Panc1 (cell line): ENCODE measurements at regions of chr6 and their contacts with region 1.

Region 1: GRCh38 chr6:166999145-166999883 is at the start of gene CEP43:
- DNase-seq: peak; percentile 78
- ATAC-seq: peak; percentile 97
- H3K4me3 ChIP-seq: peak within 1 kb of the TSS; percentile 88 to 89
- H3K27ac ChIP-seq: peak within 1 kb of the TSS; percentile 94
- H3K4me1 ChIP-seq: peaks cover 18% of the 10 kb centered on the region
- H3K27me3 ChIP-seq: no peaks in the 10 kb centered on the region
- CTCF ChIP-seq: no peak
- total RNA-seq, gene CEP43: 35.4 TPM

Region 2: DNA sequence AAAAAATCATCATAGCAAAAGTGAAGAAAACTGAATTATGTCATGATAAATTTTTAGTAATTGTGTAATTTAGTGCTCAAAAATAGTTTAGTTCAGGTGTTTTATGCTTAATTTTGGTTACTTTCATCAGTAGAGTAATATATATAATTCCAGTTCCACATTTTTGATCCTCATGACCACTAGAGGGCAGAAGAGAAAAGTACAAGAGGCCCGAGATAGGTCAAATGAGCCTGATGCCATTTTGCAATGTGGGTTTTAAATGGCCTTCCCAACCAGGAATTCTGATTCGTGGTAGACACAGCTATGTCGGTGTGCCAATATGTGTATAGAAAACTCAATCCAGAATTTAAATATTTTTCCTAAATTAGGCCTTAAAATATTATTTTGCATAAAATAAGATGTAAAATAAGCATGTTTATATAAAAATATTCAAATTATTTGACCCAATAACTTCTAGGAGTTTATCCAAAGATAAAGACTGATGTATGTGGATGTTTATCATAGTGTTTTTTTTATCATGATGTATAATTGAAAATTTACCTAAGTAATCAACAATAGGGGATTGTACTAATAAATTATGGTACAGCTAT is 212.5 kb before region 1 on chr6:
- CTCF ChIA-PET with region 1: no interaction called
- POLR2A ChIA-PET with region 1: no interaction called
- in situ Hi-C with region 1: no loop called
- intact Hi-C with region 1: loop called (anchors 1 kb)
- DNase-seq: peak; percentile 38
- ATAC-seq: peak; percentile 83
- H3K4me3 ChIP-seq: no peak overlapping the region
- H3K27ac ChIP-seq: no peak overlapping the region
- H3K4me1 ChIP-seq: no peaks in the 10 kb centered on the region
- H3K27me3 ChIP-seq: peaks cover 3% of the 10 kb centered on the region; the same call in 1 of the 2 replicates
- CTCF ChIP-seq: peak; percentile 83; the same call in 1 of the 2 replicates

Region 3: DNA sequence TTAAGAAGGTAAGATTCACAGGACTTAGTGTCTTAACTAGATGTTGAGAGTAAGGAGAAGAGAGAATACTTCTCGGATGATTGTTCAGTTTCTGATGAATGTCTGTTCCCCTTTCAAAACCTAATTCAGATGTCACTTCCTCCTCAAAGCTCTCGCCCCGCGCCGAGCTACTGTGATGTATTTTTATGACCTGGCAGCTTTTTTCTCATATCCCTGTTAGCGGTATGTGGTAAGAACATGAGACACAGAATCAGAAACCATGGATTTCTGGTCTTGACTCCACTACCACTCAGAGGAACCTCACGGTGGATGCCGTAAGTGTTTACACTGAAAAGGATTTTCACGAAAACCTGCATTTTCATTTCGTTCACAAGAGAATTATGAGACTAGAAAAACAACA is 48.2 kb after region 1 on chr6:
- CTCF ChIA-PET with region 1: no interaction called
- POLR2A ChIA-PET with region 1: no interaction called
- in situ Hi-C with region 1: no loop called
- intact Hi-C with region 1: no loop called
- DNase-seq: no peak
- ATAC-seq: no peak
- H3K4me3 ChIP-seq: no peak overlapping the region
- H3K27ac ChIP-seq: no peak overlapping the region
- H3K4me1 ChIP-seq: no peaks in the 10 kb centered on the region
- H3K27me3 ChIP-seq: no peaks in the 10 kb centered on the region
- CTCF ChIP-seq: no peak